ENCODE measurements at regions of chr11 and their contacts with region 1.

Region 1: DNA sequence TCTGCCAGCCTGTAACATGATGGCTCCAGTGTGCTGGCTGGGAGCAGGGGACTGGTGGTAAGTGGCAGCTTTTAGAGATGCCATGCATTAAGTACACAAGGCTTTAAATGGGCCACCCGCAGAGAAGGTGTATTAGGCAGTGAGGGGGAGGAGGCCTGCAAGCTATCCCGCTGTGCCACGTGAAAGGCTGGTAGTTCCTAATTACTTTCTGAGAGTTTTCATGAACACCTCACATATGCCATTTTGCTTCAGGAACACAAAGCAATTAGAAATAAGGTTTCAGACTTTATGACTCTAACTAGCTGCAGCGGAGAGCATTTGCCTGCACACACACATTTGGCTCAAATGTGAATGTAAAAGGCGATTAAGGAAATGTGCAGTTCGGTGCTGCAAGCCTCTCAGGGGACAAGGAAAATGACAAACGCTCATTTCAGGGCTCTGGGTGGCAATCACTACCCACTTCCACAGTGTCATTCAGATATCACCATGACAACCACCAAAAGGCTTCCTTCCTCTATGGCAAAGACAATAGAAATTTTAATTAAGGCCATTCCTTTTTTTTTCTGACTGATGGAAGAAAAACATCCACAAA is 116.6 kb downstream of the PLEKHA7 start:
- DNase-seq: no peak
- ATAC-seq: no peak

Region 2: DNA sequence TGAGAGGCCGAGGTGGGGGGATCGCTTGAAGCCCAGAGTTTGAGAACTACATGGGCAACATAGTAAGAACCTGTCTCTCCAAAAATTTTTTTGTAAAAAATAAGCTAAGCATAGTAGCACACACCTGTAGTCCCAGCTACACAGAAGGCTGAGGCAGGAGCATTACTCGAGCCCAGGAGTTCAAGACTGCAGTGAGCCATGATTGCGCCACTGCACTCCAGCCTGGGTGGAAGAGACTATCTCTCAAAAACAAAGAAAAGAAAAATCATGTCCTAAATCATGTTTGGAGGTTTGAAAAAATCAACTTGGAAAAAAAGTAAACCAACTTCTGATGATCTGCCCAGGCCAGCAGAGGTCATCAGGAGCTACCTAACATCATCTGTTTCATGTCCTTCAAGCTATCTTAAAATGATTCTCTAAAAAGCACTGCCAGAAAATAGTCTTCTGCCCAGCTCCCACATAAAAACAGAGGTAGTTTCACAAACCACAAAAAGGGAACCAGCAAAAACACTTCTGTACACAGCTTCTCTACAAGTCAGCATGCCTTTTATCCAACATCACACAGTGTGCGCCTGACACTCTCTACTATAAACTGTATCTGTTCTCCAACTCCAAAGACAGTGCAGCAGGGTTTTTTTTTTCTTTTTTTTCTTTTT is 706.2 kb before region 1 on chr11:
- intact Hi-C with region 1: no loop called
- DNase-seq: no peak
- ATAC-seq: peak; percentile 68

Region 3: GRCh38 chr11:16846305-16846704 is 51.3 kb before region 1 on chr11:
- intact Hi-C with region 1: no loop called
- DNase-seq: no peak
- ATAC-seq: no peak

Region 4: DNA sequence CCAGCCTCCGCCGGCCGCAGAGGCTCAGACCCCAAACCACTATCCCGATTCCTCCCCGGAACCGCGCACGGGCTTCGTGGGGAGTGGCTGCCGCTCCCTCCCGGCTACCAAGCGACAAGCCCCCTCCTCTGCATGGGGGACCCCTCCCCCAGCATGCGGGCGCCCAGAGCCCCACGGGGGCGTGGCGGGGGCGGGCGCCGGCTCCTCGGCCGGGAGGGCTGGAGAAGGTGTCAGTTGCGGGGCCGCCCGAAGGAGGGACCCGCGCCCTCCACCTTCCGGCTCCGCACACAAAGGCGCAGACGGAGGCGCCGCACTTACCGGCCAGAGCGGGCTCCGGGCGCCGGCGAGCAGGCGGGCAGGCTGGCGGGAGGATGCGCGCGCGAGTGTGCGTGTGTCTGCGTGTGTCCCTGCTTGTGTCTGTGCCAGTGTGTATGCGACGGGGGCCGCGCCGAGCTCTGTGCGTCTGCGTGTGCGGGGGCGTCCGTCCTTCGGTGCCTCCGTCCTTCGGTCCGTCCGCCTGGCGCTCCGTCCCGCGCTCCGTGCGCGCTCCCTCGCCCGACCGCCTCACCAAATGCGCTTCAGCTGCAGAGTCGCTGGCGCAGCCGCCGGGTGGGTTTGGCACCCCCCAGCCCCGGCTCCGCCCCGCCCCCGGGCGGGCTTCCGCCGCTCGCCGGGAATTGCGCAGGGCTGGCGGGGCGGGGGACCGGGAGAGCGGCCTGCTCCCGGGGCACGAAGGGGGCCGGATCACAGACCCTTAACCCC is 1893.8 kb after region 1 on chr11 and contains the start of gene PTPN5:
- intact Hi-C with region 1: loop called (anchors 5 kb)
- DNase-seq: no peak
- ATAC-seq: peak; percentile 47
- total RNA-seq, gene PTPN5: 3.2 TPM

Measured in sciatic nerve (tissue), 2 donors.